ENCODE measurements at regions of chr7 and their contacts with region 1.

Region 1: GRCh38 chr7:7103343-7104313 is 78.7 kb upstream of the C1GALT1 start:
- DNase-seq: peak in 1 of 2 donors; percentile 7
- H3K4me3 ChIP-seq: no peak overlapping the region
- H3K27ac ChIP-seq: no peak overlapping the region
- H3K4me1 ChIP-seq: peaks cover 8 to 18% of the 10 kb centered on the region in 2 donors
- H3K27me3 ChIP-seq: no peaks in the 10 kb centered on the region
- CTCF ChIP-seq: peak in 5 of 6 experiments; percentile 39 to 77 (median 65)
- POLR2A ChIP-seq: no peak

Region 2: GRCh38 chr7:7182156-7183060 is 78.8 kb after region 1 on chr7 and contains the start of gene C1GALT1:
- intact Hi-C with region 1: loop called (anchors 5 kb)
- DNase-seq: peak; percentile 98
- H3K4me3 ChIP-seq: peak within 1 kb of the TSS; percentile 23 to 68 (median 64)
- H3K27ac ChIP-seq: peak within 1 kb of the TSS; percentile 85 to 96 (median 87)
- H3K4me1 ChIP-seq: peaks cover 4 to 15% of the 10 kb centered on the region in 2 donors
- H3K27me3 ChIP-seq: no peaks in the 10 kb centered on the region
- CTCF ChIP-seq: peak in 5 of 6 experiments; percentile 18 to 55 (median 49)
- POLR2A ChIP-seq: peak; percentile 7 to 97
- total RNA-seq, gene C1GALT1: 42.9 to 99.9 (median 54.6) TPM

Region 3: GRCh38 chr7:7521259-7521658 is 417.6 kb after region 1 on chr7:
- intact Hi-C with region 1: no loop called
- DNase-seq: no peak
- H3K4me3 ChIP-seq: no peak overlapping the region
- H3K27ac ChIP-seq: no peak overlapping the region
- H3K4me1 ChIP-seq: no peaks in the 10 kb centered on the region
- H3K27me3 ChIP-seq: no peaks in the 10 kb centered on the region
- CTCF ChIP-seq: no peak
- POLR2A ChIP-seq: no peak

Region 4: GRCh38 chr7:7535691-7536090 is 432.1 kb after region 1 on chr7 and contains the start of gene COL28A1:
- intact Hi-C with region 1: loop called (anchors 10 kb)
- DNase-seq: peak; percentile 4 to 11
- H3K4me3 ChIP-seq: no peak within 1 kb of the TSS
- H3K27ac ChIP-seq: no peak within 1 kb of the TSS
- H3K4me1 ChIP-seq: no peaks in the 10 kb centered on the region
- H3K27me3 ChIP-seq: no peaks in the 10 kb centered on the region
- CTCF ChIP-seq: no peak
- POLR2A ChIP-seq: no peak
- total RNA-seq, gene COL28A1: 0.54 to 1.9 (median 0.97) TPM